ENCODE measurements at regions of chr13 and their contacts with region 1.

Region 1: DNA sequence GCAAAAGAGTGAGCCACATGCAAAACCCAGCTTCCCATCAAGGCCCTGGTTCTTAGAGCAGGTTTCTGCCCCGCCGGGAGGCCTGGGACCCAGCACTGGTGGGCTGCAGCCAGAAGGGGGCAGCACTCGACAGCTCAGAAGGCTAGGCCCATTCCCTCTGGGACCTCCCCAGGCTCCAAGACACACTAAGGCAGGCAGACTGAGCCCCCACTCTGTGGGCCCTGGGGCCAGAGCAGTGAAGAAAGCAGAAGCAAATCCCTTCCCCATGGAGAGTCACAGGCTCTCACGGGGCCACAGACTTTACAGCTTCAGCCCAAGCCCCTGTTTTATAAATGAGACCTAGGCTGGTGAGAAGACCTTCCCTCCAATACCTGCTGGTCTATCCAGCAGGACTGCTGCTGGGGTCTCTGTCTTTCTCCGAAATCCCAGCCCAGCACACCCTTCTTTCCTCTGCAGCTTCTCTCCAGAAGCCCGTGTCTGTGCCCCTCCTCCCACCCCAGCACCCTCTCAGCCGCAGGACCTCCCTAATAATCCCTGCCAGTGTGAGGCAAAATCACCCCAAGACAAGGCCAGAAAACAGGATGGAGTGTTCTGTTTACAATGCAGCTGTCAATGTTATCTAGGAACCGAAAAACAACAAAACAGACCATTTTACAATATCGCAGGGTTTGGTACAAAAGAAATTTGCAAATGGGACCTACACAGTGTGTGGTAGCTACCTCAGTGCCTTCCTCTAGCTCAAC is 109.3 kb downstream of the ABCC4 start:
- DNase-seq: peak; percentile 74
- CTCF ChIP-seq: peak; percentile 91

Region 2: GRCh38 chr13:95156208-95156607 is 35.8 kb before region 1 on chr13:
- CTCF ChIA-PET with region 1: interaction called, 13 read pairs
- POLR2A ChIA-PET with region 1: no interaction called
- DNase-seq: no peak
- CTCF ChIP-seq: peak; percentile 23

Region 3: GRCh38 chr13:95201814-95202651 is 10.0 kb after region 1 on chr13:
- CTCF ChIA-PET with region 1: interaction called, 19 read pairs
- POLR2A ChIA-PET with region 1: no interaction called
- DNase-seq: no peak
- CTCF ChIP-seq: no peak

Region 4: GRCh38 chr13:95226932-95227695 is 35.1 kb after region 1 on chr13:
- CTCF ChIA-PET with region 1: interaction called, 11 read pairs
- POLR2A ChIA-PET with region 1: no interaction called
- DNase-seq: peak; percentile 69
- CTCF ChIP-seq: no peak

Region 5: DNA sequence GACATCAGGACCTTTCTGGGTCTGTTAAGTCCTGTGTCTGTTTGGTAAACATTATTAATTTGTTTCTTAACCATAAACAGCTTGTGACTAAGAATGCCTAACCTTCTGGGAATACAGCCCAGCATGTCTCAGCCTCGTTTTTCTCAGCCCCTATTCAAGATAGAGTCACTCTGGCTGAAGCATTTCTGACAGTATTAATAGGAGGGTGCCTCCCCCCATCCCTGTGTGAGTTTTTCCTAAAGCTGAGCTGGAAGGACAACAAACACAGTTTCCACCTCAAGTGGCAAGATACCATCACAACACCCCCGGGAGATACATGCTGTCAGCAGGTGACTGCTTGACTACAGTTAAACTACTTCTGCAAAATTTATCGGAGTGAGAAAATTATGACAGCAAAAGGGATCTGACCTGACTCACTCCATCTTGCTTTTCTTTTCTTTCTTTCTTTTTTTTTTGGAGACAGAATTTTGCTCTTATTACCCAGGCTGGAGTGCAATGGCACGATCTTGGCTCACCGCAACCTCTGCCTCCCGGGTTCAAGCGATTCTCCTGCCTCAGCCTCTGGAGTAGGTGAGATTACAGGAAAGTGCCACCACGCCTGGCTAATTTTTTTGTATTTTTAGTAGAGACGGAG is 168.6 kb after region 1 on chr13:
- CTCF ChIA-PET with region 1: interaction called, 18 read pairs
- POLR2A ChIA-PET with region 1: no interaction called
- DNase-seq: no peak
- CTCF ChIP-seq: no peak

Region 6: GRCh38 chr13:95403828-95404522 is 212.0 kb after region 1 on chr13:
- CTCF ChIA-PET with region 1: interaction called, 663 read pairs
- POLR2A ChIA-PET with region 1: no interaction called
- DNase-seq: peak; percentile 88
- CTCF ChIP-seq: peak; percentile 93

Region 7: GRCh38 chr13:95834134-95834765 is 642.3 kb after region 1 on chr13:
- CTCF ChIA-PET with region 1: interaction called, 14 read pairs
- POLR2A ChIA-PET with region 1: no interaction called
- DNase-seq: peak; percentile 60
- CTCF ChIP-seq: peak; percentile 85

Measured in GM10248 (cell line).